K562 (cell line): ENCODE measurements at regions of chr1 and their contacts with region 1.

Region 1: GRCh38 chr1:26695356-26696118 is at the start of gene ARID1A:
- DNase-seq: peak; percentile 83 to 98 (median 88)
- ATAC-seq: peak; percentile 74
- H3K4me3 ChIP-seq: peak within 1 kb of the TSS; percentile 79
- H3K27ac ChIP-seq: peak within 1 kb of the TSS; percentile 92
- H3K4me1 ChIP-seq: peaks cover 43 to 47% of the 10 kb centered on the region in 2 experiments
- H3K27me3 ChIP-seq: no peaks in the 10 kb centered on the region
- CTCF ChIP-seq: peak in 1 of 3 experiments; percentile 14; a peak in 1 of 6 replicates
- EP300 ChIP-seq: peak; percentile 80
- POLR2A ChIP-seq: peak; percentile 90
- RAD21 ChIP-seq: peak; percentile 62 to 68
- polyA plus RNA-seq, gene ARID1A: 8.3 to 20.2 TPM

Region 2: GRCh38 chr1:26602378-26602959 is 93.1 kb before region 1 on chr1:
- CTCF ChIA-PET with region 1: interaction called, 3 read pairs
- POLR2A ChIA-PET with region 1: interaction called, 102 read pairs
- in situ Hi-C with region 1: no loop called
- intact Hi-C with region 1: no loop called
- DNase-seq: peak; percentile 72 to 84 (median 76)
- ATAC-seq: peak; percentile 61
- H3K4me3 ChIP-seq: no peak overlapping the region
- H3K27ac ChIP-seq: no peak overlapping the region
- H3K4me1 ChIP-seq: peaks cover 4 to 22% of the 10 kb centered on the region in 2 experiments; a peak in 4 of 5 replicates
- H3K27me3 ChIP-seq: no peaks in the 10 kb centered on the region
- CTCF ChIP-seq: peak; percentile 83 to 98 (median 83)
- EP300 ChIP-seq: 0 out of 2 replicates have a peak, but pooled peaks have one; percentile 12
- POLR2A ChIP-seq: no peak
- RAD21 ChIP-seq: peak; percentile 100

Region 3: DNA sequence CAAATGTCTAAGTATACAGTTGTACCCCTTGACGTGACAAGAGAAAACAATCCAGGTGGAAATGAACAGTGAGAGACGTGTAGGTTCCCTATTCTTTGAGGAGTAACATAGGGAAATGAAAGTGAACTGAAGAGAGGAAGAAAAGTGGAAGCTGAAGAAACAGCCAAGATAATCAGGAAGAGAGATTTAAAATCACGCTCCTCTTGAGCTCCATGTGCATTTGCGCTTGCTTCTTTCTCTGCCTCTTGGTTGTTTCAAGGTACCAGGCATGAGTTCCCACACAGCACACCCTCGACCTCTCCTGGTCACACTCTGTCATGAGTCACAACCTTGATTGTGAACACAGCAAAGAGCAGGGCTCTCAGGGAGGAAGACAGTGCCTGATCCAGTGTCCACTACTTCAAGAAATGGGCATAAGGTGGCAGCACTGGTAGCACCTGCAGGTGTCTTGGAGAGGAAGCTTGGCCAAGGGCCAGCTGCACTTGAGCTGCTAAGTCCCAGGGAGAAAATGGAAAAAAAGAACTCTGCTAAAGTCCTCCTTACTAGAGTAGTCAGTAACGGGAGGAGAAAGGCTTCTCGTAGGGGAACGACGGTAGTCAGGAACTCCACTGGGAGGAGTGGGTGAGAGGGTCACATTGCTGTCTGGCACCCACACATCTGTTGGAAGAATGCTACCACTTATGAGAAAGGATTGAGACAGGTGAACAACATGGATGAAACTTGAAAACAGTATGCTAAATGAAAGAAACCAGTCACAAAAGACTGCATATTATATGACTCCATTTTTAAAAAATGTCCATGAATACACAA is 18.0 kb before region 1 on chr1:
- CTCF ChIA-PET with region 1: no interaction called
- POLR2A ChIA-PET with region 1: interaction called, 159 read pairs
- in situ Hi-C with region 1: no loop called
- intact Hi-C with region 1: no loop called
- DNase-seq: peak; percentile 52 to 87 (median 73)
- ATAC-seq: peak; percentile 99
- H3K4me3 ChIP-seq: no peak overlapping the region
- H3K27ac ChIP-seq: no peak overlapping the region
- H3K4me1 ChIP-seq: peaks cover 9% of the 10 kb centered on the region in 2 experiments; a peak in 3 of 5 replicates
- H3K27me3 ChIP-seq: no peaks in the 10 kb centered on the region
- CTCF ChIP-seq: peak; percentile 83 to 95 (median 87)
- EP300 ChIP-seq: peak; percentile 41
- POLR2A ChIP-seq: no peak
- RAD21 ChIP-seq: peak; percentile 97 to 98

Region 4: GRCh38 chr1:26723013-26723991 is 27.8 kb after region 1 on chr1:
- CTCF ChIA-PET with region 1: no interaction called
- POLR2A ChIA-PET with region 1: interaction called, 301 read pairs
- in situ Hi-C with region 1: no loop called
- intact Hi-C with region 1: loop called (anchors 2 kb)
- DNase-seq: peak; percentile 84 to 99 (median 91)
- ATAC-seq: peak; percentile 90
- H3K4me3 ChIP-seq: peak overlapping the region; percentile 19; the same call in 1 of the 2 replicates
- H3K27ac ChIP-seq: peak overlapping the region; percentile 77
- H3K4me1 ChIP-seq: peaks cover 38 to 63% of the 10 kb centered on the region in 2 experiments
- H3K27me3 ChIP-seq: no peaks in the 10 kb centered on the region
- CTCF ChIP-seq: peak; percentile 5 to 31 (median 10); a peak in 2 of 6 replicates
- EP300 ChIP-seq: peak; percentile 69; the same call in 1 of the 2 replicates
- POLR2A ChIP-seq: no peak; the same call in 1 of the 2 replicates
- RAD21 ChIP-seq: peak in 1 of 2 experiments; percentile 43; a peak in 3 of 4 replicates

Region 5: DNA sequence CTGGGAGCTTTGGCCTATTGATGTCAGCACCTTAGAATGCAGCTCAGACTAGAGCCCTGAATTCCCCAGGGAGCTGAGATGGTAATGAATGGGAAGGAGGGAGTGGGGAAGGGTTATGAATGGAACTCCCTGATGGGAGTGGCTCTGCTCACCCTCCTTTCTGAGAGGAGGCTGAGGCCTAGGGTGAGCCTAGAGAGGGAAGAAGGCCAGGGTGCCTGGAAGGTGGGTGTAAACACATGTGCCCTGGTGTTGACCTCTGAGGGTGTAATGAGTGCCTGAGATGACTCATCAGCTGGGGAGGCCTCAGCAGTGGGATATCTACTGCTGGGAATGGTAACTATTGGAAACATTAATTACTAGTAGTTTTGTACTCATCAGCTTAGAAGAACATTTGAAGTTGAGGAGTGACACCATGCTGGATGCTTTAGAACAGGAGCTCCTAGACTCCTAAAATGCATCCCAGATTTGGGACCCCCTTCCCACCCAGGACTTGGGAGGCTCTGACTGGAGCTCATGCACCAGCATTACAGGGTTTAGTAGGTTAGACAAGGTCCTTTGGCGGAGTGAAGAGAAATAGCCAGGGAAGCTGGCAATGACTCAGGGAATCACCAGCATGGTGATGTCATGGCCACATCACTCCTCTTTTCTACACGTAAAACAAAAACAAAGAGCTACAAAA is 76.2 kb after region 1 on chr1:
- CTCF ChIA-PET with region 1: no interaction called
- POLR2A ChIA-PET with region 1: interaction called, 11 read pairs
- in situ Hi-C with region 1: no loop called
- intact Hi-C with region 1: no loop called
- DNase-seq: peak; percentile 87 to 96 (median 93)
- ATAC-seq: peak; percentile 96
- H3K4me3 ChIP-seq: no peak overlapping the region
- H3K27ac ChIP-seq: peak overlapping the region; percentile 76
- H3K4me1 ChIP-seq: peaks cover 21 to 22% of the 10 kb centered on the region in 2 experiments
- H3K27me3 ChIP-seq: no peaks in the 10 kb centered on the region
- CTCF ChIP-seq: no peak
- EP300 ChIP-seq: peak; percentile 72
- POLR2A ChIP-seq: no peak; the same call in none of the 2 replicates
- RAD21 ChIP-seq: peak; percentile 10 to 38; a peak in 2 of 4 replicates

Region 6: DNA sequence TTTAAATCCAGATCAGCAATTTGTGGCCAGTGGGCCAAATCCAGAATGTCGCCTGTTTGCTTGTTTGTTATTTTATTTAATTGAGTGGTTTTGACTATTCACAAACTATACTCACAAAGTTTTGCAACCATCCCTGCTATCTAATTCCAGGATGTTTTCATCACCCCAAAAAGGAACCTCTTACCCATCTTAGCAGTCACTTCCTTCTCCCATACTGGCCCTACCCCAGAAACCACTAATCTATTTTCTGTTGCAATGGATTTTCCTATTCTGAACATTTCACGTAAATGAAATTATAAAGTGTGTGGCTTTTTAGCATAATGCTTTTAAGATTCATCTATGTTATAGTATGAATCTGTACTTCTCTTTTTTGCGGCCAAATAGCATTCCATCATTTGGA is 580.2 kb after region 1 on chr1:
- CTCF ChIA-PET with region 1: no interaction called
- POLR2A ChIA-PET with region 1: no interaction called
- in situ Hi-C with region 1: no loop called
- intact Hi-C with region 1: no loop called
- DNase-seq: no peak
- ATAC-seq: no peak
- H3K4me3 ChIP-seq: no peak overlapping the region
- H3K27ac ChIP-seq: no peak overlapping the region
- H3K4me1 ChIP-seq: no peaks in the 10 kb centered on the region
- H3K27me3 ChIP-seq: no peaks in the 10 kb centered on the region
- CTCF ChIP-seq: no peak
- EP300 ChIP-seq: no peak
- POLR2A ChIP-seq: no peak
- RAD21 ChIP-seq: no peak